Endothelial cell of umbilical vein (primary cell): ENCODE measurements at regions of chr7 and their contacts with region 1.

Region 1: GRCh38 chr7:99616359-99617191 is at the start of gene ZSCAN25:
- DNase-seq: peak; percentile 94
- H3K4me3 ChIP-seq: peak within 1 kb of the TSS; percentile 67 to 82 (median 75)
- H3K27ac ChIP-seq: peak within 1 kb of the TSS; percentile 38
- H3K4me1 ChIP-seq: peaks cover 9% of the 10 kb centered on the region
- H3K27me3 ChIP-seq: peaks cover 0 to 3% of the 10 kb centered on the region in 2 experiments
- CTCF ChIP-seq: peak; percentile 37 to 61
- POLR2A ChIP-seq: peak; percentile 86
- total RNA-seq, gene ZSCAN25: 11.4 and 13.8 TPM in 2 replicates

Region 2: GRCh38 chr7:99392677-99393354 is 223.8 kb before region 1 on chr7:
- CTCF ChIA-PET with region 1: no interaction called
- POLR2A ChIA-PET with region 1: no interaction called
- dilution Hi-C with region 1: no loop called
- intact Hi-C with region 1: no loop called
- DNase-seq: peak; percentile 50
- H3K4me3 ChIP-seq: peak overlapping the region in 1 of 3 experiments; percentile 40
- H3K27ac ChIP-seq: peak overlapping the region; percentile 31
- H3K4me1 ChIP-seq: peaks cover 16% of the 10 kb centered on the region
- H3K27me3 ChIP-seq: no peaks in the 10 kb centered on the region
- CTCF ChIP-seq: no peak
- POLR2A ChIP-seq: peak; percentile 35

Region 3: GRCh38 chr7:99472561-99473243 is 143.9 kb before region 1 on chr7 and contains the start of gene ZNF789:
- CTCF ChIA-PET with region 1: no interaction called
- POLR2A ChIA-PET with region 1: no interaction called
- dilution Hi-C with region 1: no loop called
- intact Hi-C with region 1: loop called (anchors 2 kb)
- DNase-seq: peak; percentile 96
- H3K4me3 ChIP-seq: peak within 1 kb of the TSS; percentile 79 to 93 (median 87)
- H3K27ac ChIP-seq: peak within 1 kb of the TSS; percentile 80
- H3K4me1 ChIP-seq: peaks cover 5% of the 10 kb centered on the region
- H3K27me3 ChIP-seq: no peaks in the 10 kb centered on the region
- CTCF ChIP-seq: no peak
- POLR2A ChIP-seq: no peak
- total RNA-seq, gene ZNF789: 16.6 and 21.6 TPM in 2 replicates

Region 4: GRCh38 chr7:99525713-99526440 is 90.7 kb before region 1 on chr7:
- CTCF ChIA-PET with region 1: interaction called, 18 read pairs
- POLR2A ChIA-PET with region 1: no interaction called
- dilution Hi-C with region 1: no loop called
- intact Hi-C with region 1: no loop called
- DNase-seq: no peak
- H3K4me3 ChIP-seq: no peak overlapping the region
- H3K27ac ChIP-seq: no peak overlapping the region
- H3K4me1 ChIP-seq: no peaks in the 10 kb centered on the region
- H3K27me3 ChIP-seq: no peaks in the 10 kb centered on the region
- CTCF ChIP-seq: no peak
- POLR2A ChIP-seq: no peak

Region 5: DNA sequence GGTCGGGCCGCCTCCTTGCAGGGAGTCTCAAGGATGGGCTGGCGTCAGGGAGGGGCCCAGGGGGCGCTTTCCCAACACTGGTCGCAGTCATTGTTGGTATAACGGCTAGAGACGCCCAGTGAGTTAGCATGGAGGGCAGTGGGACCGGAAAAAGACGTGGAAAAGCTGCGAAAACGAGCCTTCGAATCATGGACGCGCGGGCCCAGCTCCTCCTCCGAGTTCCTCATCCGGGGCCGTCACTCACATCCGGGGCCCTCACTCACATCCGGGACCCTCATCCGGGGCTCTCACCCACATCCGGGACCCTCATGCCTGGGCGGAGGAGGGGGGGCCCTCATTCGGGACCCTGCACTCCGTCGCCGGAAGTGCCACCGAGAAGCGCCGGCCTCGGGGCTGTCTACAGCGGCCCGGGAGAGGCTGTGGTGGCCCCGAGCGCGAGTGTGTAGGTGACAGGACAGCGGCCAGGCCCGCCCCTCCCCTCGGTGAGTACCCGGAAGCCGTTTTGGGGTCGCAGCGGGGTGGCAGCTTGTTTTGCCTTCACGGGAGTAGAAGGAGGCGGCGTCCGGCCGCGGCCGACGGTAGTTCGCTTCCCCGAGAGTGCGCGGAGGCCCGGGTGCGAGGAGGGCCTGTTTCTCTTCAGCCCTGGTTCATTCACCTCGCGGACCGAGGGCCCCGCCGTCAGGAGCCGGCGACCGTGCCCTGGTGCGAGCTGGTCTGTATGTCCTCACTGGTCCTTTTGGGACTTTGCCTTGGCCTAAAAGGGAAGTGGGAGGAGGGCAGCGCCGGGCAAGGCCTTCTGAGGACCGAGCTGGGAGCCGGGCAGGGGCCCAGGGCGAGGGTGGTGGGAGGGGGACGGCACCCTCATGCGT is 58.0 kb before region 1 on chr7 and contains the start of gene ZNF655:
- CTCF ChIA-PET with region 1: interaction called, 6 read pairs
- POLR2A ChIA-PET with region 1: no interaction called
- dilution Hi-C with region 1: no loop called
- intact Hi-C with region 1: loop called (anchors 2 kb)
- DNase-seq: peak; percentile 61
- H3K4me3 ChIP-seq: peak within 1 kb of the TSS; percentile 80 to 86 (median 84)
- H3K27ac ChIP-seq: peak within 1 kb of the TSS; percentile 73
- H3K4me1 ChIP-seq: peaks cover 20% of the 10 kb centered on the region
- H3K27me3 ChIP-seq: no peaks in the 10 kb centered on the region
- CTCF ChIP-seq: peak in 1 of 2 donors; percentile 18
- POLR2A ChIP-seq: no peak
- total RNA-seq, gene ZNF655: 15.7 and 16.9 TPM in 2 replicates

Region 6: DNA sequence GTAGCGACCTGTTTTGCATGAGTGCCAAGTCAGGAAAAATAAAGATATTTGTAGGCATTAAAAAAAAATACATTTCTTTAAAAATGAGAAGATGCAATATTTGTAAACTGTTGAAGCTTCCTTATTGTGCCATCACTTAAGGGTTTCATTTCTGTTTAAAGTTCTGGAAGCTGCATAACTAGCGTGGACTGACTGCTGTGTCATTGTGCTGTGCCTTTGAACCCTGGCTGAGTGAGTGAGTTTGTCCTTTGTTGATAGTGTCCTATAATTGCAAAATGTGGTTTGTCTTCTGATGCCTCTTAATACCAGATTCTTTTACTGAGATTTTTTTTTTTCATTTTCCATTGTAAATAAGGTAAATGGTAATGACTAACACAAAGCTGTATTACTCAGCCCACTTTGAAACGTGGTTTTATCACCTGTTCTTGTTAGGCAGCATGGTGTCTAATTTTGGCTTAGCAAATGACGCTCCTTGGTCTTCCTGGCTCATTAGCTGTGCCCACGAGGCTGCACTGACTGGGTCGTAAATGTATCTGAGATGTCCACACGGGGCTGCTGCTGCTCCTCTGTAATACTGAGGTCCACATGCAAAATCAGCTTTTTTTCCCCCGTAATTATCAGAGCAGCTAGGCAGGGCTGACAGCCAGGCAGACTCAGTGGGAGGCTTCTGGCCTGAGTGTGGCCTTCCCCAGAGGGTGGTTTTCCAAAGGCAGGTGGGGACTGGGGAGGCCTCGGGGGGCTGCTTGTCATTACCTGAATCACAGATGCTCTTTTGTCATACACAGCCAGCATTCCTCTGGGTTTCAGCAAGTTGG is 14.9 kb after region 1 on chr7:
- CTCF ChIA-PET with region 1: no interaction called
- POLR2A ChIA-PET with region 1: no interaction called
- dilution Hi-C with region 1: no loop called
- intact Hi-C with region 1: no loop called
- DNase-seq: no peak
- H3K4me3 ChIP-seq: no peak overlapping the region
- H3K27ac ChIP-seq: no peak overlapping the region
- H3K4me1 ChIP-seq: no peaks in the 10 kb centered on the region
- H3K27me3 ChIP-seq: no peaks in the 10 kb centered on the region
- CTCF ChIP-seq: no peak
- POLR2A ChIP-seq: no peak